ENCODE measurements at regions of chr15 and their contacts with region 1.

Region 1: DNA sequence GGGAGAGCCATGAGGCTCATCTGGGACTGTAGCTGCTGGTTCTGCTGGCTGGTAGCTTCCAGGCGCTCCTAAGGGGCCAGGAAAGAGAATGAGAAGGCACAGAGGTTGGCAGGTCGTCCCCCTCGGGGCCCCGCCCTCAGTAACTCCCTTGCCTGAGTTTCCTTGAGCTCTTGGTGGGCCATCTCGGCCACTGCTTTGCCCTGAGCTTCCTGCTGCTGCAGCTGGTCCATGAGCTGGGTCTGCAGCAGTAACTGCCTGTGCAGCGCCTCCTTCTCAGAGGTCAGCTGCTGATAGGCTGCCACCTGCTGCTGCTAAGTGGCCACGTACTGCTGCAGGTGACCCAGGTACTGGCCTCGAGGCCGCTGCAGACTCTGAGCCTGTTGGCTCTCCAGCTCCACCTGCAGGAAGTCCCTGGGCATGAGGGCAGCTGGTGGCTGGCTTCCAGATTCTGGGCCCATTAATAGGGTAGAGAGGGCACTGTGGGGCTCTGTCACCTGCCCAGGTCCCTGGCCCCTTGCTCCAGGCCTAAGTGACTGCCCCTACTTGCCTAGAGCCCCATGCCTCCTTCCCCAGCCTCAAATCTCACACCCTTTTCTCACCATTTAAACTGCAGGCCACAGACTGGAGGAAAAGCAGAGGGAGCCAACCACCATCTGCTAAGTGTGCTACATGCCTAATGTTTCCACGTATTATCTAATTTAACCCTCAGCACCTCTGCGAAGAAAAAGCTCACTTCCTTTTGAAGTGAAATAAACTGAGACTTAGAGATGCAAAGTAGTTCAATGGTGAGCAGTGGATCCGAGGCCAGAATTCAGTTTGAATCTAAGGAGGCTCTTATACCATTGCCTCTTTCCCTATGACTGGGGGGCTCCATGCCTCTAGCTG is 10.8 kb upstream of the VPS33B start:
- DNase-seq: peak; percentile 80 to 88 (median 87)
- ATAC-seq: peak; percentile 93 to 99 (median 96)
- H3K4me3 ChIP-seq: no peak overlapping the region
- H3K27ac ChIP-seq: no peak overlapping the region
- H3K4me1 ChIP-seq: no peaks in the 10 kb centered on the region
- H3K27me3 ChIP-seq: no peaks in the 10 kb centered on the region
- CTCF ChIP-seq: peak in 3 of 4 donors; percentile 74 to 86 (median 77)
- POLR2A ChIP-seq: no peak

Region 2: DNA sequence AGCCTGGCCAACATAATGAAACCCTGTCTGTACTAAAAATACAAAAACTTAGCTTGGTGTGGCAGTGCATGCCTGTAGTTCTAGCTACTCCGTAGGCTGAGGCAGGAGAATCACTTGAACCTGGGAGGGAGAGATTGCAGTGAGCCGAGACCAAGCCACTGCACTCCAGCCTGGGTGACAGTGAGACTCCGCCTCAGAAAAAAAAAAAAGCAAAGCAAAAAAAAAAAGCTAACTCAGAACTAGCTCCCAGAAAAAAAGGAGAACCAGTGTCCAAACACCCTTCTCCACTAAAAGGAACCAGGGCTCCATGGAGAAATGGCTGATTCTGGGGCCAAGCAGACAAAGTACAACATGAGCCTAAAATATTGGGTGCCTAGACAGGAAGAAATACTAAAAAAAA is 520.2 kb before region 1 on chr15:
- intact Hi-C with region 1: no loop called
- DNase-seq: no peak
- ATAC-seq: peak in 1 of 4 donors; percentile 50
- H3K4me3 ChIP-seq: no peak overlapping the region
- H3K27ac ChIP-seq: no peak overlapping the region
- H3K4me1 ChIP-seq: no peaks in the 10 kb centered on the region
- H3K27me3 ChIP-seq: no peaks in the 10 kb centered on the region
- CTCF ChIP-seq: no peak
- POLR2A ChIP-seq: no peak

Region 3: GRCh38 chr15:90839187-90840071 is 193.7 kb before region 1 on chr15:
- intact Hi-C with region 1: no loop called
- DNase-seq: no peak
- ATAC-seq: peak; percentile 44 to 70 (median 60)
- H3K4me3 ChIP-seq: no peak overlapping the region
- H3K27ac ChIP-seq: no peak overlapping the region
- H3K4me1 ChIP-seq: no peaks in the 10 kb centered on the region
- H3K27me3 ChIP-seq: no peaks in the 10 kb centered on the region
- CTCF ChIP-seq: no peak
- POLR2A ChIP-seq: no peak

Region 4: DNA sequence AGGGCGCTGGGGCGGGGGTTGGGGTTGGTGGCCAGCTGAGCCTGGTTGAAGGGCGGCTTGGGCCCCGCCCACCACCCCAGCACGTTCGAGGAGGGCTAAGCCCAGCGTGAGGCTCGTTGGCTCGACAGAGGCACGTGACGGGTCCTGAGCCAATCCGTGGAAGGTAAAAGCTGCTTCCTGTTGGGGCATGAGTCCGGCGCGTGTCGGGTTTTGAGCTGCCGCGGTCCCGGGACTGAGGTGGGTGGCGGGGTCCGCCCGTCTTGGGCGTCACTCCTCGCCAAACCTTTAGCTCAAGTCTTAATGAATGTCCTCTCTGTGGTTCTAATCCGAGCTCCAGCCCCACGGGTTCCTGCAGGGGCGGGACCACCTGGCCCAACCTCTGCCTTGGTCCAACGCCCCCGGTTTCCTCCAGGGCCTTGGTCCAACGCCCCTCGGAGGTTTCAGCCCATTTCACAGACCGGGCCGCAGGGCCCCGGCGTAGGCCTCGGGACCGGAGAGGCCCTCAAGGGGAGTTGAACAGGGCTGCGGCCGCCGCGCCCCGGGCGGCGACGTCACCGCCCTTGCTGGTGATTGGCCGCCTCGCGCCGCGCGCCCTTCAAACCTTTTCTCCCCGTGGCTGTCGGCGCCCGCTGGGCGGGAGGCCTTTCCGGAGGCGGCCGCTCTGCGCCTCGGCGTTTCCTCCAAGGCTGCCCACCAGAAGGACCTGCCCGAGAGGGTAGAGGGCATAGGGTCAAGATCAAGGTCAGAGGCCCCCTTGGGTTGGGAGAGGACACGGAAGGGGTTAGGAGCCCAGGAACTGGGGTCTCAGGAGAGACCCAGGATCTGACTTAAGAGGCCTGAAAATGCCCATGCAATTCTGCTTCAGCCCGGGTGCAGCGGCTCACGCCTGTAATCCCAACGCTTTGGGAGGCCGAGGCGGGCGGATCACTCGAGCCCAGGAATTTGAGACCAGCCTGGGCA is 78.2 kb before region 1 on chr15 and contains the start of gene RCCD1:
- intact Hi-C with region 1: loop called in 1 of 2 experiments (anchors 10 kb)
- DNase-seq: peak; percentile 95 to 97 (median 97)
- ATAC-seq: peak; percentile 95 to 97 (median 97)
- H3K4me3 ChIP-seq: peak within 1 kb of the TSS; percentile 57 to 84 (median 69)
- H3K27ac ChIP-seq: peak within 1 kb of the TSS; percentile 70 to 82 (median 79)
- H3K4me1 ChIP-seq: peaks cover 0 to 16% (median 6%) of the 10 kb centered on the region in 4 donors
- H3K27me3 ChIP-seq: no peaks in the 10 kb centered on the region
- CTCF ChIP-seq: no peak
- POLR2A ChIP-seq: peak; percentile 64
- total RNA-seq, gene RCCD1: 4.8 to 7.9 (median 6.6) TPM